ENCODE measurements at regions of chr2 and their contacts with region 1.

Region 1: GRCh38 chr2:54723131-54723995 is at the start of gene EML6:
- DNase-seq: peak; percentile 98 to 100
- H3K4me3 ChIP-seq: peak within 1 kb of the TSS; percentile 96
- H3K27ac ChIP-seq: peak within 1 kb of the TSS; percentile 69 to 84
- H3K4me1 ChIP-seq: peaks cover 0 to 6% of the 10 kb centered on the region in 2 donors
- H3K27me3 ChIP-seq: no peaks in the 10 kb centered on the region
- CTCF ChIP-seq: peak in 1 of 3 experiments; percentile 22
- total RNA-seq, gene EML6: not detected

Region 2: DNA sequence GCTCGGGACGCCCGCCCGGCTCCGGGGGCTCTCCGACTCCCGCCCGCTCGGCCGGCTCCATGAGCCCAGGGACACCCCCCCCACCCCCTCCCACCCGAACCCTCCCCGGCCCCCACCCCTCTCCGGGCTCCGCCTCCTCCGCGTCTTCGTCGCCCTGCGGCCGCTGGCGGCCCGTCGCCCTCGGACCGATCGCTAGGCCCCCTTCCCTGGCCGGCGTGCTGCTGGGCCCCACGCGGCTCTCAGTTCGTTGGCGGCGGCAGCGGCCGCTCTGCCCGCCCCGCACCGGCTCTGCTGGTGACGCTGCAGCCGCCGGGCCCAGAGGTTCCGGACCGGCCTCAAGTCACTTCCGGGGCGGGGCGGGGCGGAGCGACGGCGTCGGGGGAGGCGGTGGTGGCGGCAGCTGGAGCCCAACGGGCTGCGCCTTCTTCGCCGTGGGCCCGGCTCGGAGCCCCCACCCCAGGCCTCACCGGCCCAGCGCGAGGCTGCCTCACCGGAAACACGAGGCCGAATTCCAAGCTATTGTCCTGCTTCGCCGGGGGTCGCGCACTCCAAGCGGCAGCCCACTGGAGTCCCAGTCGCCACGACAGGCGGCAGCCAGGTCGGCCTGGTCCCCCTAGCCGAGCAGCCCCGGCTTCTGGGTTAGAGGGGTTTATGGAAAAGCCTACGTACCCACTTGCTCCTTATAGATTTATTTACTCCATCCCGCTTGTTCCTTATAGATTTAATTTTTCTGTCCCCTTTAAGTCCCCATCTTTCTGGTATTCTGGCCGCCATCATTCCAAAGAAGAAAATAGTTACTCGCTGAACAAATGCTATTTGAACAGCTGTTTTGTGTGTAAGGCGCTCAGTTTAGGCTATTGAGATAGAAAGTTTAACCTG is 752.4 kb before region 1 on chr2 and contains the start of gene PSME4:
- intact Hi-C with region 1: loop called (anchors 1 kb)
- DNase-seq: peak; percentile 77 to 97
- H3K4me3 ChIP-seq: peak within 1 kb of the TSS; percentile 90 to 92
- H3K27ac ChIP-seq: peak within 1 kb of the TSS; percentile 96 to 97
- H3K4me1 ChIP-seq: peaks cover 3 to 15% of the 10 kb centered on the region in 2 donors
- H3K27me3 ChIP-seq: no peaks in the 10 kb centered on the region
- CTCF ChIP-seq: no peak
- total RNA-seq, gene PSME4: 14.9 TPM

Region 3: DNA sequence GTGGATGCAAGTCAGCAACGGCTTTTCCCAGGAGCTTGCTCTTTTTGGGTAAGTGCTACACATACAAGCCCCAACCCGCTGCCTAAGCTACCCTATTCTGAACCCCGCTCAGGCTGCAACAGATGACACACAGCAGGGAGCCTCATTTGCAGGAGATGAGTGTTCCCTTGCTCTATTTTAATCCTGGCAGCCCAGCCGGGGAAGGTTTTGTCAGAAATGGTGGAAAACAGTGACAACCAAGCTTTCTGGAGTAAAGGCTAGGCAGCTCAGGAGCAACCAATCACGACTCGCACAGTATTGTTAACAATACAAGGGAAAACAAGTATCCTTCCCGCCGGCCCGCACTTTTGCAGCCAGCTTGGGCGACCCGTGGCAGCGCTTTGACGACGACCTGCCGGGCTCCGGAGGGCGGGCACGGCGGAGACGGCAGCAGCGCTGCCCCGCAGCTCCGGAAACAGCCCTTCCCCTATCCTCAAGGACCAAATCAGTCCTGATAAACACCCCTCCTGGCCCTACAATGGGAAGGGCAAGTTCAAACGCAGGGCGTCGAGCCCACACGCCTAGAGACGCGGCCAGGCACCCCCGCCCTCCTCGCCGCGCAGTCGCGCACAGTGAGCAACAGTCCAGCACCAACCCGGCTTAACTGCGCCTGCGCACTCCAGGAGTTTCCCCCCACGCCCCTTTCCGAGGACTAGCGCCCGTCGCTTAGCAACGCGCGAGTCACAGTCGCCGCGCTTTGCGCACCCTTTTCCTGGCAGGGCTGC is 393.0 kb before region 1 on chr2:
- intact Hi-C with region 1: loop called (anchors 5 kb)
- DNase-seq: peak; percentile 87 to 98
- H3K4me3 ChIP-seq: peak overlapping the region; percentile 67 to 69
- H3K27ac ChIP-seq: peak overlapping the region; percentile 88 to 96
- H3K4me1 ChIP-seq: peaks cover 2% of the 10 kb centered on the region in 2 donors
- H3K27me3 ChIP-seq: no peaks in the 10 kb centered on the region
- CTCF ChIP-seq: no peak

Region 4: GRCh38 chr2:55111570-55112228 is 388.3 kb after region 1 on chr2:
- intact Hi-C with region 1: loop called (anchors 10 kb)
- DNase-seq: peak; percentile 66 to 92
- H3K4me3 ChIP-seq: no peak overlapping the region
- H3K27ac ChIP-seq: peak overlapping the region; percentile 81 to 88
- H3K4me1 ChIP-seq: peaks cover 9 to 32% of the 10 kb centered on the region in 2 donors
- H3K27me3 ChIP-seq: no peaks in the 10 kb centered on the region
- CTCF ChIP-seq: no peak

Region 5: DNA sequence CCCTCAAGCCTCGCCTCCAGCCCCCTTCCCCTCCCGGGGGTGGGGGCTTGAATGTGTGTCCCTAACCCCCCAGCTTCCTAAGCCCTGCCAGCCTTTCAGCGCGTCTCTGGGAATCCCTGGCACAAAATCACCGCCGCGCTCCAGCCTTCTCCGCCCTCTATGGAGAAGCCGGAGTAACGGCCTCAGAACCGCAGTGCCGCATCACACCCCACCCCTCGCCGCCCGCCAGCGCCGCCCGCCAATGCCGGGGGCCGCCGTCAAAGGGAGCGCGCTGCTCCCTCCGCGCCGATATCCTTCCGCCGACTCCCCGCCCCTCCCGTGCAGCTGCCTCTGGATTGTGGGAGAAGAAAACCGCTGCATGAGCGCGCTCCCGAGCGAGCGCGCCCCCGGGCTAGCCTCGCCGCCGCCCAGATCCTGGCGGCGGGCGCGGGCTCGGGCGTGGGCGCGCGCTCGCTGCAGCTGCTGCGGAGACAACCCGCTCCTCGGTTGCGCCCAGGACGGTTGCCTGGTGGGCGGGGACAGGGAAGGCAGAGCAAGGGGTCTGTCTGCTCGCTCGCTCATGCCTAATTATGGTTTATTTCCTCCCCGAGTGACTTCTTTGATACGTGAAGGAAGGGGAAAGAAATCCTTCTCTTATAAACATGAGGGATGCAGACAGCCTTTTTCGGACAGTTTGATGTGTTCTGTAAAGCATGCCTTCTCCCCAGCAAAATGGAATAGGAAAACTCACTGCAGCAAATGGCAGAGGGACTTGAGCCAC is 696.5 kb after region 1 on chr2 and contains the start of gene CCDC88A:
- intact Hi-C with region 1: loop called (anchors 5 kb)
- DNase-seq: peak; percentile 84 to 97
- H3K4me3 ChIP-seq: peak within 1 kb of the TSS; percentile 83 to 92
- H3K27ac ChIP-seq: peak within 1 kb of the TSS; percentile 85 to 92
- H3K4me1 ChIP-seq: peaks cover 0 to 8% of the 10 kb centered on the region in 2 donors
- H3K27me3 ChIP-seq: no peaks in the 10 kb centered on the region
- CTCF ChIP-seq: peak; percentile 28 to 39 (median 29)
- total RNA-seq, gene CCDC88A: 39.2 TPM